Mammary epithelial cell (primary cell): ENCODE measurements at regions of chr5 and their contacts with region 1.

Region 1: GRCh38 chr5:15003511-15003920 is 131.9 kb upstream of the ANKH start:
- DNase-seq: peak; percentile 56
- H3K4me3 ChIP-seq: no peak overlapping the region
- H3K27ac ChIP-seq: no peak overlapping the region
- H3K4me1 ChIP-seq: peaks cover 9% of the 10 kb centered on the region
- H3K27me3 ChIP-seq: no peaks in the 10 kb centered on the region
- CTCF ChIP-seq: peak; percentile 77 to 79

Region 2: GRCh38 chr5:14405267-14405666 is 598.2 kb before region 1 on chr5:
- CTCF ChIA-PET with region 1: no interaction called
- dilution Hi-C with region 1: no loop called
- in situ Hi-C with region 1: loop called (anchors 25 kb)
- intact Hi-C with region 1: no loop called
- DNase-seq: no peak
- H3K4me3 ChIP-seq: no peak overlapping the region
- H3K27ac ChIP-seq: no peak overlapping the region
- H3K4me1 ChIP-seq: peaks cover 29% of the 10 kb centered on the region
- H3K27me3 ChIP-seq: no peaks in the 10 kb centered on the region
- CTCF ChIP-seq: peak; percentile 9 to 13

Region 3: DNA sequence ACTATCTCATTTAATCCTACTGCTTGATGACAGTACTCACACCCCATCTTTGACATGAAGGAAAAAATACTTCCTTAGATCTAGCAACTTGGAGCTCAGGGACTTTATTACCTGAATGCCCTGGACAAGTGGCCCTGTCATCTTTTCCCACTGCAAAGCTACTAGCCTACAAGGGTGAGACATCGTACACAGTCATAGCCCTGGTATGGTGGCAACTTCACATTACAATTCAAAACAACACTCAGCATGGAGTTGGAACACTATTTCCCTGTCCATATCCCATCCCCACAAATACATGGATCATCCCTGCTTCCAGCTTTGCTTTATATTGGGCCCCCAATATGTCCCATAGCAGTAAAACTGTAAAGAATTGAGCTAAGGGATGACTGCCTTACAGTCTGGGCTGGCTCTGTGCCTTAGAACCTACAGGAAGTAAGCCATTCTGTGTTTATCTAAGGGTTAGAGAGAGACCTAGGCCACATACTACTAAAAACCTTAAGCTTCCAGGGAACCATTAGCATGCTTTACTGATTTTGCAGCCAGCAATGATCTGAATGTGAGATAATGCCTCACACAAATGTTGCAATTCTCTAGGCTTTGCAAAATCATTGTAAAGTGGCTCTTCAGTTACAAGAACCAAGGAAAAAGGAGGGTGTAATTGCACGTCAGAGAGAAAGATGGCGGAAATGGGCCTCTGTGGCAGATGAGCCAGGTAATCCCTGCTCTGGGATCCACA is 283.1 kb before region 1 on chr5:
- CTCF ChIA-PET with region 1: no interaction called
- dilution Hi-C with region 1: no loop called
- in situ Hi-C with region 1: loop called in 1 of 2 experiments (anchors 5 kb)
- intact Hi-C with region 1: no loop called
- DNase-seq: no peak
- H3K4me3 ChIP-seq: no peak overlapping the region
- H3K27ac ChIP-seq: no peak overlapping the region
- H3K4me1 ChIP-seq: no peaks in the 10 kb centered on the region
- H3K27me3 ChIP-seq: no peaks in the 10 kb centered on the region
- CTCF ChIP-seq: no peak

Region 4: GRCh38 chr5:14871210-14872069 is 132.1 kb before region 1 on chr5 and contains the start of gene ANKH:
- CTCF ChIA-PET with region 1: interaction called, 8 read pairs
- dilution Hi-C with region 1: no loop called
- in situ Hi-C with region 1: no loop called
- intact Hi-C with region 1: loop called (anchors 1 kb)
- DNase-seq: peak; percentile 78
- H3K4me3 ChIP-seq: peak within 1 kb of the TSS; percentile 63 to 82 (median 72)
- H3K27ac ChIP-seq: peak within 1 kb of the TSS; percentile 26
- H3K4me1 ChIP-seq: peaks cover 19% of the 10 kb centered on the region
- H3K27me3 ChIP-seq: no peaks in the 10 kb centered on the region
- CTCF ChIP-seq: peak in 1 of 2 donors; percentile 12
- total RNA-seq, gene ANKH: 77.8 to 138 TPM

Region 5: GRCh38 chr5:14914603-14915277 is 88.8 kb before region 1 on chr5:
- CTCF ChIA-PET with region 1: no interaction called
- dilution Hi-C with region 1: no loop called
- in situ Hi-C with region 1: no loop called
- intact Hi-C with region 1: no loop called
- DNase-seq: peak; percentile 67
- H3K4me3 ChIP-seq: no peak overlapping the region
- H3K27ac ChIP-seq: no peak overlapping the region
- H3K4me1 ChIP-seq: peaks cover 34% of the 10 kb centered on the region
- H3K27me3 ChIP-seq: no peaks in the 10 kb centered on the region
- CTCF ChIP-seq: no peak

Region 6: DNA sequence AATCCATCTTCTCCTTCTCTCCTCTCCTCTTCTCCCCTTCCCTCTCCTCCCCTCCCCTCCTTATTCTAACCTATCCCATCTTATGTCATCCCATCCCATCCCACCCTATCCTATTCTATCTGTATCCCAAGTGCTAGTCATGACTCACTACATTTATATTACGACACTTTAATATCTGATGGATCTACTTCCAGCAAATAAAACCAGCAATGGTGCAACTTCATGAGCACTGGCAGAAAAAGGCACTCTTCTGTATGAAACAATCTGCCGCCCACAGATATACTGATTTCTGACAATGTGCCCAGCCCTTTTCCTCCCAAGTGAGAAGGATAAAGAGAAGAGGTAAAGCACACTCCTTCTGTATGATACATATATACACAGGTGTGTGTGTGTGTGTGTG is 45.3 kb before region 1 on chr5:
- CTCF ChIA-PET with region 1: interaction called, 5 read pairs
- dilution Hi-C with region 1: no loop called
- in situ Hi-C with region 1: no loop called
- intact Hi-C with region 1: loop called (anchors 2 kb)
- DNase-seq: peak; percentile 56
- H3K4me3 ChIP-seq: no peak overlapping the region
- H3K27ac ChIP-seq: no peak overlapping the region
- H3K4me1 ChIP-seq: peaks cover 19% of the 10 kb centered on the region
- H3K27me3 ChIP-seq: no peaks in the 10 kb centered on the region
- CTCF ChIP-seq: no peak